MCF 10A (cell line): ENCODE measurements at regions of chr12 and their contacts with region 1.

Region 1: GRCh38 chr12:72017054-72017651 is 78.5 kb downstream of the TPH2 start:
- DNase-seq: peak; percentile 80
- H3K4me3 Mint-ChIP-seq: no peak overlapping the region
- H3K27ac Mint-ChIP-seq: no peak overlapping the region
- H3K4me1 Mint-ChIP-seq: peaks cover 2% of the 10 kb centered on the region
- H3K27me3 Mint-ChIP-seq: peaks cover 16% of the 10 kb centered on the region
- CTCF ChIP-seq: peak; percentile 75

Region 2: GRCh38 chr12:71639341-71639760 is 377.8 kb before region 1 on chr12:
- CTCF ChIA-PET with region 1: no interaction called
- POLR2A ChIA-PET with region 1: no interaction called
- intact Hi-C with region 1: no loop called
- DNase-seq: peak; percentile 26
- H3K4me3 Mint-ChIP-seq: no peak overlapping the region
- H3K27ac Mint-ChIP-seq: peak overlapping the region; percentile 9
- H3K4me1 Mint-ChIP-seq: peaks cover 6% of the 10 kb centered on the region
- H3K27me3 Mint-ChIP-seq: no peaks in the 10 kb centered on the region
- CTCF ChIP-seq: no peak

Region 3: DNA sequence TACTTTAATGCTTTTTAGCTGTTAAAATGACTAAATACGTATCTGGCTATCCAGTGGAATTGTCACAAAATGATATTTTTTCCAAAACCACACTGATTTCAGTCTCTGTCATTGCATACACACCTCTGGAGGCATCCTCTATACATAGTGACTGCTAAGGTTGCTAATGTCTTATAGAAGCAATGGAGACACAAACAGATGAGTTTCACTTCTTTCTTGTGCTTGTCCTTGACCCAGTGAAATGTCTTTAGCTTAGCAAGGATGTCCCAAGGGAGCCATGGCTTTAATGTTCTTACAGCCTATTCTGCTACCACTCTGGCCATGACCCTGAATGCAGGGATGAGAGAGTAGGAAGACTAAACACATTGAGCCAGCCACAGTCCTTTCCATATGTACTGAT is 11.8 kb after region 1 on chr12:
- CTCF ChIA-PET with region 1: interaction called, 15 read pairs
- POLR2A ChIA-PET with region 1: no interaction called
- intact Hi-C with region 1: no loop called
- DNase-seq: no peak
- H3K4me3 Mint-ChIP-seq: no peak overlapping the region
- H3K27ac Mint-ChIP-seq: no peak overlapping the region
- H3K4me1 Mint-ChIP-seq: peaks cover 14% of the 10 kb centered on the region
- H3K27me3 Mint-ChIP-seq: peaks cover 26% of the 10 kb centered on the region
- CTCF ChIP-seq: no peak

Region 4: DNA sequence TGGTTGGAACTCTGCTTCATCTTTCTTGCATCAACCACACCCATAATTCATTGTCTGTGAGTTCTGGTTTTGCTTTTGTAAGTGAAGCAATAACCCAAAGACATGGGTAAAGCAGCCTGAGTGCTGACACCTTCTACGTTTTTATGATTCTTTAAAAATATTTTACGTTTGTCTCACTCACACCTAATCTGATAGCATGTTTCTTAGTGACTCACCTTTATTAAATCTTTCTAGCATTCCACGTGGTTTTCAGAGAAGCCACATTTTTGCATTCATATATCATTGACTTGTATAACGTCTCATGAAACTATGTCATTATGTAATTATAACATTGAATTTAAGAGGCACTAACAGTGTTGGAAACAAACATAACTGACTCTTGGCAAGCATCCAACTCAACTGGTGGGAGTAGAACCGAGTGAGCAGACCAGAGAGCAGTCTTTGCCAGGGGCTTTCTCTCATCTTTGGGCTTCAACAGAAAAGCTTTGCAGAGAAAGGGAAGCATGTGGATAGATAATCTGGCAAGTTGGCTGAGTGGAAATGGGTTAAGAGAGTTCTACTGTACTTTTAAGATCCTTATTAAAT is 40.3 kb after region 1 on chr12:
- CTCF ChIA-PET with region 1: no interaction called
- POLR2A ChIA-PET with region 1: no interaction called
- intact Hi-C with region 1: no loop called
- DNase-seq: peak; percentile 36
- H3K4me3 Mint-ChIP-seq: no peak overlapping the region
- H3K27ac Mint-ChIP-seq: no peak overlapping the region
- H3K4me1 Mint-ChIP-seq: no peaks in the 10 kb centered on the region
- H3K27me3 Mint-ChIP-seq: no peaks in the 10 kb centered on the region
- CTCF ChIP-seq: no peak

Region 5: GRCh38 chr12:72282721-72283120 is 265.6 kb after region 1 on chr12:
- CTCF ChIA-PET with region 1: interaction called, 6 read pairs
- POLR2A ChIA-PET with region 1: no interaction called
- intact Hi-C with region 1: loop called (anchors 1 kb)
- DNase-seq: peak; percentile 39
- H3K4me3 Mint-ChIP-seq: no peak overlapping the region
- H3K27ac Mint-ChIP-seq: no peak overlapping the region
- H3K4me1 Mint-ChIP-seq: no peaks in the 10 kb centered on the region
- H3K27me3 Mint-ChIP-seq: no peaks in the 10 kb centered on the region
- CTCF ChIP-seq: peak; percentile 36